WTC11 (cell line): ENCODE measurements at regions of chr10 and their contacts with region 1.

Region 1: DNA sequence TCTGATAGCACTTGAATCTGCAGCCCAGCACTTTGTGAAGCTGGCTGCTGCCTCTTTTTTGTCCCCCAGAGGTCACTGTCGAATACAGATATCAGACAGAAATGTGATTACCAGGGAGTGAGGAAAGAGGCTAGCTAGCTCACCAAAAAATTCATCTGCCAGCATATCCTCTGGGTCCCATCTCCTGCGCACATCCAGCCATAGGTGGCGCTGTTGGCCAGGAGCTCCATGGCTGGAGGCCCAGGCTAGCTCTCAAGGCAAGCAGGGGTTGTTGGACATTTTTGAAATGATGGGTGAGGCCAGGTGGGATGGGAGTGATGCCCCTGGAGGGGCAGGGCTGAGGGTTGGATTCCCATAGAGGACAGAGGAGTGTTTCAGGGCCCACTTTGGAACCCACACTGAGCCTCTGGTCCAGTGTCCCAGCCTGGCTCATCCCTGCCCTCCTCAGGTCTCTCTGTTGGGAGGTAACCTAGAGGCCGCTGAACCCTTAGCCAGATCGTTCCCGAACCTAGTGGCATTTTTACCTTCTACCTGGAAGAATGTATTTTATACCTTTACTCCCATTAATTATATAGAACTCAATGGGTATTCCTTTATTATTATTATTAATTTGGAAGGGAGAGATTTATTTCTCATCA is 14.8 kb downstream of the DPCD start:
- DNase-seq: peak; percentile 94
- ATAC-seq: peak; percentile 96
- H3K4me3 Mint-ChIP-seq: no peak overlapping the region
- H3K27ac Mint-ChIP-seq: peak overlapping the region; percentile 45; the same call in 1 of the 2 replicates
- H3K4me1 Mint-ChIP-seq: peaks cover 10% of the 10 kb centered on the region
- H3K27me3 Mint-ChIP-seq: no peaks in the 10 kb centered on the region
- CTCF ChIP-seq: peak; percentile 96

Region 2: GRCh38 chr10:101244321-101245050 is 358.4 kb before region 1 on chr10:
- CTCF ChIA-PET with region 1: no interaction called
- POLR2A ChIA-PET with region 1: no interaction called
- DNase-seq: no peak
- ATAC-seq: no peak
- H3K4me3 Mint-ChIP-seq: no peak overlapping the region
- H3K27ac Mint-ChIP-seq: no peak overlapping the region
- H3K4me1 Mint-ChIP-seq: no peaks in the 10 kb centered on the region
- H3K27me3 Mint-ChIP-seq: peaks cover 61% of the 10 kb centered on the region
- CTCF ChIP-seq: no peak

Region 3: GRCh38 chr10:101280511-101280910 is 322.4 kb before region 1 on chr10:
- CTCF ChIA-PET with region 1: no interaction called
- POLR2A ChIA-PET with region 1: no interaction called
- DNase-seq: no peak
- ATAC-seq: no peak
- H3K4me3 Mint-ChIP-seq: no peak overlapping the region
- H3K27ac Mint-ChIP-seq: no peak overlapping the region
- H3K4me1 Mint-ChIP-seq: peaks cover 37% of the 10 kb centered on the region
- H3K27me3 Mint-ChIP-seq: peaks cover 47% of the 10 kb centered on the region
- CTCF ChIP-seq: no peak

Region 4: GRCh38 chr10:101319241-101319915 is 283.5 kb before region 1 on chr10:
- CTCF ChIA-PET with region 1: no interaction called
- POLR2A ChIA-PET with region 1: no interaction called
- DNase-seq: peak; percentile 38
- ATAC-seq: peak; percentile 43
- H3K4me3 Mint-ChIP-seq: no peak overlapping the region
- H3K27ac Mint-ChIP-seq: no peak overlapping the region
- H3K4me1 Mint-ChIP-seq: peaks cover 21% of the 10 kb centered on the region
- H3K27me3 Mint-ChIP-seq: peaks cover 3% of the 10 kb centered on the region; the same call in 1 of the 2 replicates
- CTCF ChIP-seq: no peak

Region 5: GRCh38 chr10:101569838-101570766 is 32.8 kb before region 1 on chr10:
- CTCF ChIA-PET with region 1: interaction called, 30 read pairs
- POLR2A ChIA-PET with region 1: no interaction called
- DNase-seq: peak; percentile 82
- ATAC-seq: peak; percentile 55
- H3K4me3 Mint-ChIP-seq: peak overlapping the region; percentile 79
- H3K27ac Mint-ChIP-seq: no peak overlapping the region
- H3K4me1 Mint-ChIP-seq: peaks cover 36% of the 10 kb centered on the region
- H3K27me3 Mint-ChIP-seq: peaks cover 78% of the 10 kb centered on the region
- CTCF ChIP-seq: peak; percentile 95

Region 6: DNA sequence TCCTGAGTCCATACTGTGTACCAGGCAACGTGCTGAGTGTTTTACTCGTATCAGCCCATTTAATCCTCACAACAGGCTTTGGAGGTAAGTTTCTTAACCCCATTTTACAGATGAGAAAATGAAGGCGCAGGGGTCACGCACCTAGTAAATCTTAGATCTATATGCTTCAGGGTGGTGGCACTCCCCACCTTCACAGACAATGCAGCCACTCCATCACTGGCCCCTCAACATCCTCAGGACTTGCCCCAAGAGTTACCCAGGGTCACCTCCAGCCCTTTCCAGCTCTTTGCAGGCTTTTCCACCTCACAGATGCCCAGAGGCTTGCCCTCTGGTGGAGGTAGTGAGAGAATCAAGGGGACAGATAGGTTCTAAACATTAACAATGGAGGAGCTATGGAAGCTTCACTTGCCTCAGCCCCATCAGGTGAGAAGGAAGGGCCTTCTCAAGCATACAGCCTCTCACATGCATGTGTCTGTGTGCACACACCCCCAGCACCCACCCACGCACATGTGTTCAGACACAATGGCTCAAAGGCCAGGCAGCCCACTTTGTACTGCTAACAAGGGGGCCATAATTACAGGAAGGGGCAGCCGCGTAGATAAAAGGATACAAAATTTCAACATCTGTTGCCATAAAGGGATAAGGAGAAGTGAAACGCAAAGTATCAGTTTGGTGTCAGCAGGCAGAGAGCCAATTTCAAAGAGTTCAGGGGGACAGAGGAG is 14.4 kb after region 1 on chr10:
- CTCF ChIA-PET with region 1: interaction called, 167 read pairs
- POLR2A ChIA-PET with region 1: no interaction called
- DNase-seq: no peak
- ATAC-seq: peak; percentile 61
- H3K4me3 Mint-ChIP-seq: no peak overlapping the region
- H3K27ac Mint-ChIP-seq: peak overlapping the region; percentile 60
- H3K4me1 Mint-ChIP-seq: peaks cover 22% of the 10 kb centered on the region
- H3K27me3 Mint-ChIP-seq: no peaks in the 10 kb centered on the region
- CTCF ChIP-seq: no peak

Region 7: DNA sequence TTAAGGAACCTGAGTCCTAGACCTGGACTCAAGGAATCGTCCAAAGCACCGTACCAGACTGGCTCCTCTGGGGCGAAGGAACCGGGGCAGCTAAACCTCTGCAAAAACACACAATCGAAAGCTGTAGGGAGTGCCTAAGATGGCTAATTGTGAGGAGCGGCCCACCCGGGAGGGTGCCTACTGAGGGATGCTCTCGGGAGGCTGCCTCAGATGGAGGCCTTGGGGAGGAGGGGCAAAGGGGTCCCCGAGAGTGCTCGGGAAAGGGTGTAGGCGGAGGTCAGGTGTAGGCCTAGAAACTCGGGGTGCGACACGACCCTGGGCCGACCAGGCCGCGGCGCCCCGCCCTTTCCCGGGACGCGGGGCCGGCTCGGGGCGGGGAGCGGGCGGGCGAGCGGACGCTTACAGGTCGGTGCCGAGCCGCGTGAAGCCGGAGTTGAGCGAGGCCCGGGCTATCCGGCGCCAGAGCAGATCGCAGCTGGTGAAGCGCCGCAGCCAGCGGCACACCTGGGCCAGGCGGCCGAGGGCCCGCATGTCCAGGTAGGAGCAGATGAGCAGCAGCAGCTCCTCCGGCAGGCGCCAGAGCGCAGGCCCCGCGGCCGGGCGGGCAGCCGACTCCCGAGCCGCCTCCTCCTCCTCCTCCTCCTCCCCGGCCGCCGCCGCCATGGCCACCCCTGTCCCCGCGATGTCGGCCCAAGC is 91.2 kb after region 1 on chr10:
- CTCF ChIA-PET with region 1: interaction called, 20 read pairs
- POLR2A ChIA-PET with region 1: no interaction called
- DNase-seq: peak; percentile 72
- ATAC-seq: peak; percentile 79
- H3K4me3 Mint-ChIP-seq: peak overlapping the region; percentile 81
- H3K27ac Mint-ChIP-seq: peak overlapping the region; percentile 95
- H3K4me1 Mint-ChIP-seq: peaks cover 43% of the 10 kb centered on the region
- H3K27me3 Mint-ChIP-seq: no peaks in the 10 kb centered on the region
- CTCF ChIP-seq: no peak

Region 8: DNA sequence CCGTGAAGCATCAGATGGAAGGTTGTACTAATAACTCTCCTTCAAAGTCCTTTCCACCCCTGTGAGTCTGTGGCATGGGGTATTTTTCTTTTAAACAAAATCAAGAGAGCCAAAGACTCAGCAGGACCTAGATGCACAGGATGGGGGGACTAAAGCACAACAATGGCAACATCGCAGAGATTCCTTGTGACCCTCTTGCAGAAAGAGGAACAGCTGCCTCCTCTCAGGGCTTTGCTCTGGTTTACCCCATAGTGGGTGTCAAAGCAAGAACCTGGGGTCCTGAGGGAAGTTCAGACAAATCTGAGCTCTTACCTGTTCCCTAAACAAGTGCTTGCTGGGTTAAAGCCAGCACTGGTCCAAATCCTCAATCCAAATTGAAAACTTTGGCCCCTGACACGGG is 133.8 kb after region 1 on chr10:
- CTCF ChIA-PET with region 1: interaction called, 11 read pairs
- POLR2A ChIA-PET with region 1: no interaction called
- DNase-seq: no peak
- ATAC-seq: peak; percentile 55
- H3K4me3 Mint-ChIP-seq: no peak overlapping the region
- H3K27ac Mint-ChIP-seq: no peak overlapping the region
- H3K4me1 Mint-ChIP-seq: 0 out of 2 replicates have a peak, but pooled peaks cover 3% of the 10 kb centered on the region
- H3K27me3 Mint-ChIP-seq: no peaks in the 10 kb centered on the region; the same call in 1 of the 2 replicates
- CTCF ChIP-seq: no peak

Region 9: DNA sequence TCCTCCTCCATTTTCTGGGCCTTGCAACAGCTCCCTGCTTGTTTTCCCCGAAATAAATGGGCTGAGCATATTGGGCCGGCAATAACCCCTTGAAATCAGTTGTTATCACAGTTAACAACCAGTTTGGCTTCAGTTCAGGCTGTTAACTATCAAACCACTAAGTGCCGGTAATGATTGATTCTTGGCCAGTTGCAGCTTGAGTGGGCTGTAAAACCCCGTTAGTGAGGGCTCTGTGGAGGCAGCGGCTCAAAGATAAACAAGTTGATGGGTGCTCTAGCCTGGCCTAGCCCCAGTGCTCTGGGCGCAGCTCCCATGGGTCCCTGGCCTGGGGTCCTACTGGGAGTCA is 164.7 kb after region 1 on chr10:
- CTCF ChIA-PET with region 1: interaction called, 110 read pairs
- POLR2A ChIA-PET with region 1: no interaction called
- DNase-seq: no peak
- ATAC-seq: no peak
- H3K4me3 Mint-ChIP-seq: no peak overlapping the region
- H3K27ac Mint-ChIP-seq: no peak overlapping the region
- H3K4me1 Mint-ChIP-seq: peaks cover 12% of the 10 kb centered on the region
- H3K27me3 Mint-ChIP-seq: peaks cover 13% of the 10 kb centered on the region
- CTCF ChIP-seq: no peak

Region 10: GRCh38 chr10:101818119-101818871 is 215.4 kb after region 1 on chr10 and contains the start of gene OGA:
- CTCF ChIA-PET with region 1: interaction called, 11 read pairs
- POLR2A ChIA-PET with region 1: interaction called, 3 read pairs
- DNase-seq: peak; percentile 98
- ATAC-seq: peak; percentile 91
- H3K4me3 Mint-ChIP-seq: peak within 1 kb of the TSS; percentile 88
- H3K27ac Mint-ChIP-seq: peak within 1 kb of the TSS; percentile 98
- H3K4me1 Mint-ChIP-seq: peaks cover 26% of the 10 kb centered on the region
- H3K27me3 Mint-ChIP-seq: no peaks in the 10 kb centered on the region
- CTCF ChIP-seq: no peak
- total RNA-seq, gene OGA: 110 to 111 TPM (median 110 TPM) in 3 replicates